ENCODE measurements at regions of chr19 and their contacts with region 1.

Region 1: DNA sequence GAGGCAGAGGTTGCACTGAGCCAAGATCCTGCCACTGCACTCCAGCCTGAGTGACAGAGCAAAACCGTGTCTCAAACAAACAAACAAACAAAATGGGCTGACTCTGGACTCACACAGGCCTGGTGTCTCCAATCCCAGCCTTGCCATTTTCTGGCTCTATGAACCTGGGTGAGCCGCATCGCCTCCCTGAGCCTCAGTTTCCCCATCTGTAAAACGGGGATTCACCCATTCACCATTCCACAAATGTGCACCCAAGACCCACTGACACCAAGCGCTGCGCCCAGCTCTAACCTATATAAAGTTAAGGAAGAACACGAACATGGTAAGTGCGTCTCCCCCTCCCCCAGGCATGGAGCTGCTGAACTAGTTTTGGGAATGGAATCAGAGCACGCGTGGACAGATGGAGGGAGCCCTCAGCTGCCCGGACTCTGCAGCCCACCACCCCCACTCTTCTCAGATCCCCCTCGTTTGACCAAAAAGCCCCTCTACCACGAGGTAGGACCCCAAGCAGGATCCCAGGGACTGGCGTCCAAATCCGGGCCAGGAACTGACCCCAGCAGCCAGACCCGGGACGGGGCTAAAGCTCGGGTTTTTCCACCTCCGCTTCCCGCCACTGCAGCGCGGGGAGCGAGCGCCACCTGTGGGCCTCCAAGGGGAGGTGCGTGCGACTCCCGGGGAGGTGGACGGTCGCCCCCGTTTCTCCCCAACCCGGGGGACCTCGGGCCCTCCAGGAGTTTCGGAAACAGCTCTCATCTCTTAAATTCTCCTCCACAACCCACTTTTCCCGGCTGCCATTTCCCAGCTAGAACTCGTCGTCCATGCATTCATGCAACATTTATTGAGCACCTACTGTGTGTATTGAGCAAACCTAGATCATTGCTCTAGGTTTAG is 33.0 kb upstream of the ADGRE5 start:
- DNase-seq: peak; percentile 80 to 91 (median 89)
- ATAC-seq: peak; percentile 92
- H3K4me3 ChIP-seq: peak overlapping the region; percentile 35
- H3K27ac ChIP-seq: no peak overlapping the region; the same call in 2 of the 3 replicates
- H3K4me1 ChIP-seq: peaks cover 3 to 14% of the 10 kb centered on the region in 2 experiments; a peak in 3 of 5 replicates
- H3K27me3 ChIP-seq: peaks cover 0 to 13% of the 10 kb centered on the region in 2 experiments; a peak in 2 of 5 replicates
- CTCF ChIP-seq: peak; percentile 93 to 96 (median 93)
- EP300 ChIP-seq: no peak
- POLR2A ChIP-seq: no peak
- RAD21 ChIP-seq: peak; percentile 93 to 96

Region 2: GRCh38 chr19:14147797-14148605 is 200.2 kb before region 1 on chr19:
- CTCF ChIA-PET with region 1: interaction called, 12 read pairs
- POLR2A ChIA-PET with region 1: no interaction called
- in situ Hi-C with region 1: no loop called
- intact Hi-C with region 1: no loop called
- DNase-seq: peak; percentile 76 to 83 (median 81)
- ATAC-seq: peak; percentile 95
- H3K4me3 ChIP-seq: no peak overlapping the region
- H3K27ac ChIP-seq: no peak overlapping the region
- H3K4me1 ChIP-seq: peaks cover 12 to 34% of the 10 kb centered on the region in 2 experiments; a peak in 4 of 5 replicates
- H3K27me3 ChIP-seq: no peaks in the 10 kb centered on the region
- CTCF ChIP-seq: peak; percentile 84 to 93 (median 90)
- EP300 ChIP-seq: no peak
- POLR2A ChIP-seq: no peak; the same call in 1 of the 2 replicates
- RAD21 ChIP-seq: peak; percentile 58 to 81

Region 3: DNA sequence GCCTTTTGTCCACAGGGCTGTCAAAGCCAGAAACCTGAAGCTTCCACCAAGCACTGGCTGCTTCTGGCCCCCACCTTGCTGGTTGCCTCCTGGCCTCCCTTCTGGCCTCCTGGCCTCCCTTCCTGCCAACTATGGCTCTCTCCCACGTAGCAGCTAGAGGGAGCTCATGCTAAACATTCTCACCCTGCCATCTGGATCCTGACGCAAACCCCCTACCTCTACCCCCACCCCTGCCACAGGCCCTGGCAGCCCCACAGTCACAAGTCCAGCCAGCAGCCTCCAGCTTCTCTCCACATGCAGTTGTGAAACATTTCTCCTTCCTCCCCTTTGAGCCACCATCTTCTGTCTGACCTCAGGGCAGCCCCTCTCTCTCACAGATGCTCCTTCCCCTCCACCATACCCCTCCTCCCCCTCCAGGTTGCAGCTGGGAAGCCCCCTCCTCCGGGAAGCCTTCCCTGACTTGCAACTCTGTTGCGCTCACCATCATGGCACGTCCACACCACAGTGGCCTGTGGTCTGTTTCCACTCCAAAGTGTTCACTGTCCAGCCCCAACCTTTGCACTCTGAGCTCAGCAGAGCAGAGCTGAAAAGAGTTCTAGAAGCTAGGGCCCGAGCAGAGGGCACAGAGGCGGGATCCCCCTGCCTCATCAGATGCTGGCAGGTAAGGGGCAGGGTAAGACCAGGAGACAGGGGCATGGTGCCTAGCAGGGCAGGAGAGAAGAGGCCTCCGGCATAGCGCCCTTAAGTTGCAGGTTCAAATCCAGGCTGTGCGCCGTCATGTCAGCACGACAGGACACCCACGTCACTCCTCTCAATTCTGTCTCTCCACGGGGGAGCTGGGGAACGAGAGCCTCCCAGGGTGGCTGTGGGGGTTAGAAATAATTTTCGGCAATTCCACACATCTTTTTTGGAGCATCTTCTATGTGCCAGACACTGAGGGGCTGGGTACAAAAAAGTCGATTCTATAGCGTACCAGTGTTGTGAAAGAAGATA is 149.6 kb before region 1 on chr19:
- CTCF ChIA-PET with region 1: interaction called, 7 read pairs
- POLR2A ChIA-PET with region 1: interaction called, 4 read pairs
- in situ Hi-C with region 1: loop called (anchors 5 kb)
- intact Hi-C with region 1: loop called (anchors 2 kb)
- DNase-seq: peak in 1 of 4 experiments; percentile 33
- ATAC-seq: peak; percentile 11; the same call in 1 of the 3 replicates
- H3K4me3 ChIP-seq: no peak overlapping the region
- H3K27ac ChIP-seq: no peak overlapping the region
- H3K4me1 ChIP-seq: peaks cover 0 to 12% of the 10 kb centered on the region in 2 experiments; a peak in 2 of 5 replicates
- H3K27me3 ChIP-seq: no peaks in the 10 kb centered on the region
- CTCF ChIP-seq: peak; percentile 25 to 47 (median 34); a peak in 4 of 6 replicates
- EP300 ChIP-seq: no peak
- POLR2A ChIP-seq: no peak
- RAD21 ChIP-seq: peak in 1 of 2 experiments; percentile 45; a peak in 2 of 4 replicates

Region 4: DNA sequence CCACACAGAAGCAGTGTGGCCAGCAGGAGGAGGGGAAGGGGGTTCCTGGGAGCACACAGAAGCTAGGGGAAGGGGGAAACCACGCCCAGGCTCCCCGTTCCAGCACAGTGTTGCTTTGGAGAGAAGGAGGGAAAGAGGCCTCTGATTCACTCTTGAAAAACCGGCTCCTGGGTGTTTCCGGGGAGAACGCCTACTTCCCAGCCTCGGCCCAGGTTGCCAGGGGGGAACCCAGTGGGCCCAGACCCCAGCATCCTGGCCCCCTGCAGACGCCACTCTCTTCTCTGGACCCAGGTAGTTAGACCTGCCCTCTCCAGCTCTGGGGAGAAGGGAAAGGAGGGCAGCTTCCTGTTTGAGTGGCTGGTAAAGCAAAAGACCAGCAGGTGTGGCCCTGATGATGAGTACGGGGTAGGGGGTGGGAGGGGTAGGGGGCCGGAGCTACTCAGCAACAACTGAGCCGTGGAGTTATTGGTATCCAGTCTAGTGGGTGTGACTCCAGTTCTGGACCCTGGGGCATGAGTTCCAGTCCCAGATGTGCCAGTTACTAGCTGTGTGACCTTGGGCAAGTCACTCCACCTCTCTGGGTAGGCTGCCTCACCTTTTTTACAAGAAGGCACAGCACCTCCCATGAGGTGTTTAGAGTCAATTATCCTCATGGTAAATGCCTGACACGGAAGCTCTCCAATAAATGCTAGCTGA is 146.8 kb after region 1 on chr19:
- CTCF ChIA-PET with region 1: no interaction called
- POLR2A ChIA-PET with region 1: no interaction called
- in situ Hi-C with region 1: no loop called
- intact Hi-C with region 1: no loop called
- DNase-seq: peak in 2 of 4 experiments; percentile 9 to 43
- ATAC-seq: no peak
- H3K4me3 ChIP-seq: peak overlapping the region; percentile 68
- H3K27ac ChIP-seq: peak overlapping the region; percentile 10; the same call in 1 of the 3 replicates
- H3K4me1 ChIP-seq: peaks cover 16 to 29% of the 10 kb centered on the region in 2 experiments; a peak in 4 of 5 replicates
- H3K27me3 ChIP-seq: no peaks in the 10 kb centered on the region
- CTCF ChIP-seq: no peak
- EP300 ChIP-seq: no peak
- POLR2A ChIP-seq: no peak
- RAD21 ChIP-seq: no peak